ENCODE measurements at regions of chr2 and their contacts with region 1.

Region 1: GRCh38 chr2:96760036-96760985 is at the start of gene CNNM4:
- DNase-seq: peak; percentile 86 to 93
- ATAC-seq: peak; percentile 93 to 95
- H3K4me3 ChIP-seq: peak within 1 kb of the TSS; percentile 55
- H3K27ac ChIP-seq: peak within 1 kb of the TSS; percentile 80 to 93
- H3K4me1 ChIP-seq: peaks cover 38% of the 10 kb centered on the region
- CTCF ChIP-seq: no peak
- EP300 ChIP-seq: no peak
- POLR2A ChIP-seq: peak; percentile 92
- RAD21 ChIP-seq: no peak; a peak in 1 of 5 replicates
- polyA plus RNA-seq, gene CNNM4: 11.2 and 15.0 TPM in 2 replicates

Region 2: GRCh38 chr2:96498023-96498431 is 262.3 kb before region 1 on chr2:
- CTCF ChIA-PET with region 1: no interaction called
- POLR2A ChIA-PET with region 1: no interaction called
- DNase-seq: no peak
- ATAC-seq: peak in 1 of 2 experiments; percentile 22; a peak in 1 of 6 replicates
- H3K4me3 ChIP-seq: no peak overlapping the region
- H3K27ac ChIP-seq: no peak overlapping the region
- H3K4me1 ChIP-seq: peaks cover 3% of the 10 kb centered on the region; the same call in 2 of the 3 replicates
- CTCF ChIP-seq: no peak
- EP300 ChIP-seq: no peak
- POLR2A ChIP-seq: no peak
- RAD21 ChIP-seq: no peak

Region 3: DNA sequence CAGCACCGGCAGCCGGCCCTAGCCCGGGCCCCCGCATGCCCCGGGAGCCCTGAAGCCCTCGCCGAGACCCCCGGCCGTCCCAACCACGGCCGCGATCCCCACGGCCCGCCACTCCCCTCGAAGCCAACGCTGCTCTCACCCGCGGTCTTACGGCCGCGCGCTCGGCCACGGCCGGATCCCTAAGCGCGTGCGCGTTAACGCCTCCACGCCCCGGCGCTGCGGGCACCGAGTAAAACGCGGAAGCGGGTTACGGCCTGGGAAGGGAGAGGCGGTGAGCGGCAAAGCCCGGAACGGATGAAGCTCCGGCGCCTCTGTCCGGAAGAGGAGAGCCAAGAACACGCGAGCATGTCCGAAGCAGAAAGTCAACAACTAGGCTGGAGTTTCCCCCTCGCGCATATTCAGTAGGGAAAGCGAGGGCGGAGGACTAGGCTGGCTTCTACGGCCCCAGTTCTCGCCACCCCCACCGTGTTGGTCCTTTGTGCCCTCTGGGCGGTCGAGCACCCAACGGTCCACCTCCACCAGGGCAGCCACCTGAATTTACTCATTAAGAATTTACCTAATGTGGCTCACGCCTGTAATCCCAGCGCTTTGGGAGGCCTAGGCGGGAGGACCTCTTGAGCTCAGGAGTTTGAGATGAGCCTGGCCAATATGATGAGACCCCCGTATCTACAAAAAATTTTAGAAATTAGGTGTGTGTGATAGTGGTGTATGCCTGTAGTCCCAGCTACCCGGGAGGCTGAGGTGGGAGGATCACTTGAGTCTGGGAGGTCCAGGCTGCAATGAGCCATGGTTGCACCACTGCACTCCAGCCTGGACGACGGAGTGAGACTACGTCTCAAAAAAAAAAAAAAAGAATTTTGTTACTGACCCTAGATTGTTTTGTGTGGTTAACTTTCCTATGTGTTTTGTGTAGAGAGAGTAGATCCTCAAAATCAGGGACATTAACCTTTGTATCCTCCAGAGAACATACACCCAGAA is 121.9 kb before region 1 on chr2 and contains the start of gene KANSL3:
- CTCF ChIA-PET with region 1: interaction called, 10 read pairs
- POLR2A ChIA-PET with region 1: interaction called, 18 read pairs
- DNase-seq: peak; percentile 66 to 95
- ATAC-seq: peak; percentile 79 to 86
- H3K4me3 ChIP-seq: peak within 1 kb of the TSS; percentile 52
- H3K27ac ChIP-seq: peak within 1 kb of the TSS; percentile 94 to 98
- H3K4me1 ChIP-seq: peaks cover 29% of the 10 kb centered on the region; the same call in 2 of the 3 replicates
- CTCF ChIP-seq: no peak
- EP300 ChIP-seq: 0 out of 5 replicates have a peak, but pooled peaks of 1 of the 2 experiments have one; percentile 37
- POLR2A ChIP-seq: peak; percentile 80
- RAD21 ChIP-seq: peak; percentile 28 to 47; a peak in 4 of 5 replicates
- polyA plus RNA-seq, gene KANSL3: 23.0 and 33.1 TPM in 2 replicates

Region 4: GRCh38 chr2:96747136-96747535 is 13.2 kb before region 1 on chr2:
- CTCF ChIA-PET with region 1: interaction called, 10 read pairs
- POLR2A ChIA-PET with region 1: no interaction called
- DNase-seq: no peak
- ATAC-seq: no peak
- H3K4me3 ChIP-seq: no peak overlapping the region
- H3K27ac ChIP-seq: no peak overlapping the region
- H3K4me1 ChIP-seq: peaks cover 15% of the 10 kb centered on the region; the same call in 2 of the 3 replicates
- CTCF ChIP-seq: no peak
- EP300 ChIP-seq: no peak
- POLR2A ChIP-seq: no peak
- RAD21 ChIP-seq: no peak

Region 5: GRCh38 chr2:96783388-96783787 is 23.1 kb after region 1 on chr2:
- CTCF ChIA-PET with region 1: interaction called, 16 read pairs
- POLR2A ChIA-PET with region 1: no interaction called
- DNase-seq: no peak
- ATAC-seq: no peak
- H3K4me3 ChIP-seq: no peak overlapping the region
- H3K27ac ChIP-seq: no peak overlapping the region
- H3K4me1 ChIP-seq: peaks cover 23% of the 10 kb centered on the region
- CTCF ChIP-seq: no peak
- EP300 ChIP-seq: no peak
- POLR2A ChIP-seq: no peak
- RAD21 ChIP-seq: no peak

Region 6: DNA sequence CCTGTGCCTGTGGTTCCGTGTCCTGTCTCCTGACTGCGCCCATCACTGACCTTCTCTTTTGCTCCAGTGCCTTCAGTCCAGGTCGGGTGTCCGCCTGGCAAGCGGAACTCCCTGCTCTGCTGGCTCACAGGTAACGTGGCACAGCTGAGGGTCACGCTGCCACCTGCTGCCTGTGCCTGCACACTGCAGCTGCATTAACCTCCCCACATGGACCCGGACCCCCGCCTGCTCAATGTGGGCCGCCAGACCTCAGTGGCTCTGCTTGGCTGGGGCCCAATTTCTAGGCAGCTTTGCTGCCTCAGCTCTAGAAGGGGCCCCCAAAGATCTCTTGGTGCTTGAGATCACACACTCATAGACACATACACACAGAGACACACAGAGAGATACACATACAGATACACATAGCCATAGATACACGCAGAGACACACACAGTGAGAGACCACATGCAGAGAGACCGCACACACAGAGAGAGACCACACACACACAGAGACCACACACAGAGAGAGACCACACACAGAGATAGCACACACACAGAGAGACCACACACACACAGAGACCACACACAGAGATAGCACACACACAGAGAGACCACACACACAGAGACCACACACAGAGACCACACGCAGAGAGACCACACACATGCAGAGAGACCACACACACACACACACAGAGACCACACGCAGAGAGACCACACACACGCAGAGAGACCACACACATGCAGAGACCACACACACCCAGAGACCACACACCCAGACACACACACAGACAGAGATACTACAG is 40.9 kb after region 1 on chr2:
- CTCF ChIA-PET with region 1: interaction called, 52 read pairs
- POLR2A ChIA-PET with region 1: interaction called, 3 read pairs
- DNase-seq: peak; percentile 68 to 72
- ATAC-seq: peak; percentile 93 to 98
- H3K4me3 ChIP-seq: no peak overlapping the region
- H3K27ac ChIP-seq: peak overlapping the region; percentile 23 to 69; a peak in 3 of 6 replicates
- H3K4me1 ChIP-seq: peaks cover 7% of the 10 kb centered on the region; the same call in 1 of the 3 replicates
- CTCF ChIP-seq: peak; percentile 83
- EP300 ChIP-seq: no peak
- POLR2A ChIP-seq: no peak
- RAD21 ChIP-seq: peak; percentile 85 to 90

Measured in A549 (cell line).